ENCODE measurements at regions of chrX and their contacts with region 1.

Region 1: GRCh38 chrX:78139160-78140123 is at the start of gene TAF9B:
- DNase-seq: peak; percentile 95
- H3K4me3 Mint-ChIP-seq: peak within 1 kb of the TSS; percentile 92
- H3K27ac Mint-ChIP-seq: peak within 1 kb of the TSS; percentile 95
- H3K4me1 Mint-ChIP-seq: peaks cover 6% of the 10 kb centered on the region
- H3K27me3 Mint-ChIP-seq: no peaks in the 10 kb centered on the region
- total RNA-seq, gene TAF9B: 14.6 and 16.1 TPM in 2 replicates

Region 2: DNA sequence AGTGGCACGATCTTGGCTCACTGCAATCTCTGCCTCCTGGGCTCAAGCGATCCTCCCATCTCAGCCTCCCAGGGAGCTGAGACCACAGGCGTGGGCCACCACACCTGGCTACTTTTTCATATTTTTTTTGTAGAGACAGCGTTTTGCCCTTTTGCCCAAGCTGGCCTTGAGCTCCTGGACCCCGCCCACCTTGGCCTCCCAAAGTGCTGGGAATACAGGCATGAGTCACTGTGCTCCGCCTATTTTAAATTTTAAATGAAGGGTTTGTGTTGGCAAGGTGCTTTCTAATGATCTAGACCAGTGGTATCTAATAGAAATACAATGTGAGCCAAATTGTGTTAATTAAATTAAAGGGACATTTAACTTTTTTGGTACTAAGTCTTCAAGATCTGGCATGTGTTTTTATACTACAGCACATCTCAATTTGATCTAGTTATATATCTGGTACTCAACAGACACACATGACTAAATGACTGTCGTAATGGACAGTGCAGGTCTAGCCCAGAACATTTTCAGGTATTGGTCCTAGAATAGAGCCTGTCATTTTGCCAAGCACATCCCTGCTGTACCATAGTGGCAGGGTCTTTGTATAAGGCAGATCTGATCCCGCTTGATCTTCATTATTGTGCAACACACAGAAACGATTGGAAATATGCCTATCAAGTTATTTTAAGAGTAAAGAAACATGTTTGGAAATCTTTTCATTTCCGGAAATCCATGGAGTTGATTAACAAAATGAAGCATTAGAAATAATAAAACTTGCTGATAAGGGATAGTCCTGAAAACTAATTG is 28.1 kb before region 1 on chrX:
- intact Hi-C with region 1: no loop called
- DNase-seq: no peak
- H3K4me3 Mint-ChIP-seq: peak overlapping the region; percentile 67
- H3K27ac Mint-ChIP-seq: no peak overlapping the region
- H3K4me1 Mint-ChIP-seq: peaks cover 34% of the 10 kb centered on the region
- H3K27me3 Mint-ChIP-seq: no peaks in the 10 kb centered on the region

Region 3: GRCh38 chrX:78123190-78123589 is 16.3 kb before region 1 on chrX:
- intact Hi-C with region 1: loop called (anchors 2 kb)
- DNase-seq: no peak
- H3K4me3 Mint-ChIP-seq: peak overlapping the region; percentile 33
- H3K27ac Mint-ChIP-seq: peak overlapping the region; percentile 85
- H3K4me1 Mint-ChIP-seq: peaks cover 37% of the 10 kb centered on the region
- H3K27me3 Mint-ChIP-seq: no peaks in the 10 kb centered on the region

Region 4: DNA sequence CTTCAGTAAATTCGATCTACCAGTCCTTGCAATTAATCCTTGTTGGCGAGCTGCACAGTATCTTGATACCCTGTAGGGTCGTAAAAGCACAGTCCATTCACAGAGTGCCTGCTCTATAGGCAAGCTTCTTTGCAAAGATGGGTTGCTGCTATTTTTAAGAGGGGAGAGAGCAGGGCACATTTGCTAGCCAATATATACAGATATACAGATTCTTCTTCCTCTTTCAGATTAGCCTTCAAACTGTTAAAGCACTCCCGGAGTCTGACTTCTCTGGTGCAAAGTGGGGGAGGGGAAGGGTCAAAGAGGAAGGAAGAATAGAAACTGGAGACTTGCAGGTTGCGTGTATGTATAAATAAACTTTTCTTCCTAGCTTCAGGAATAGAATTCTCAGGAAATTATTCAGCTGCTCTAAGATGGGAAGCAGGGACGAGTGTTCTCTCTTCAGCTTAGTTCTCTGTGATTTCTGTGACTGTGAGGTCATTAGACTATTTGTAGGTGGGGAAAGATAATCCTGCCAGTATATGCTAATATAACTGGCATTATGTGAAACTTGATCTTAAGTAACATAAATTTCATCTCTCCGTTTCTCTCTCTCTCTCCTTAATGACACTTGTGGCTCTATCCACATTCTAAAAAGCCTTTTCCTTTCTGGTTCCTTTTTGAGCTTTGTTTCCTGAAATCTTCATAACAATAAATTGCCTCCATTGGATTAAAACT is 188.1 kb after region 1 on chrX and contains the start of gene CYSLTR1:
- intact Hi-C with region 1: loop called (anchors 5 kb)
- DNase-seq: peak; percentile 69
- H3K4me3 Mint-ChIP-seq: peak within 1 kb of the TSS; percentile 75
- H3K27ac Mint-ChIP-seq: peak within 1 kb of the TSS; percentile 90
- H3K4me1 Mint-ChIP-seq: peaks cover 52% of the 10 kb centered on the region
- H3K27me3 Mint-ChIP-seq: no peaks in the 10 kb centered on the region
- total RNA-seq, gene CYSLTR1: 16.1 and 17.2 TPM in 2 replicates

Region 5: DNA sequence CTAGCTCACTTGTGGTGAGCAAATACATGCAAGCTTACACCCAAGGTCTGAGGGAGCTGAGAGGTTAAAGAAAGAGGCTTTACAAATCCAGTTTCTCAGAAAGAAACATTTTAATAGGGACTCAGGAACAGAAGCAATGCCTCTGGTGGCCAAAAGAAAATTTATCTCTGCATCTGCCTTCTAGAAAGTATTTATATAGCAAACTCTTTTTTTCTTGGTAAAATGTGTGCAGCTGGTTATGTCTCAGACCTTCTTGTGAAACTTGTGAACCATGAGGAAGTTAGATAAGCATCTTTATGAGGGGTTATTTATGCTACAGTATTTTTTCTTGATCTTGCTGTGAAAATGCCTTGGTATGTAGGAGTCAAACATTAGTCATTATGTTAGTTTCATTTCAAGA is 236.5 kb after region 1 on chrX:
- intact Hi-C with region 1: loop called (anchors 5 kb)
- DNase-seq: peak; percentile 58
- H3K4me3 Mint-ChIP-seq: no peak overlapping the region
- H3K27ac Mint-ChIP-seq: peak overlapping the region; percentile 58
- H3K4me1 Mint-ChIP-seq: peaks cover 23% of the 10 kb centered on the region
- H3K27me3 Mint-ChIP-seq: no peaks in the 10 kb centered on the region

Region 6: GRCh38 chrX:79081895-79082512 is 942.6 kb after region 1 on chrX:
- intact Hi-C with region 1: loop called (anchors 10 kb)
- DNase-seq: peak; percentile 78
- H3K4me3 Mint-ChIP-seq: peak overlapping the region; percentile 78
- H3K27ac Mint-ChIP-seq: peak overlapping the region; percentile 87
- H3K4me1 Mint-ChIP-seq: peaks cover 14% of the 10 kb centered on the region
- H3K27me3 Mint-ChIP-seq: no peaks in the 10 kb centered on the region

Region 7: GRCh38 chrX:79452881-79453280 is 1313.4 kb after region 1 on chrX:
- intact Hi-C with region 1: loop called (anchors 10 kb)
- DNase-seq: no peak
- H3K4me3 Mint-ChIP-seq: no peak overlapping the region
- H3K27ac Mint-ChIP-seq: no peak overlapping the region
- H3K4me1 Mint-ChIP-seq: peaks cover 7% of the 10 kb centered on the region
- H3K27me3 Mint-ChIP-seq: no peaks in the 10 kb centered on the region